Mucosa of descending colon (tissue), 3 donors: ENCODE measurements at regions of chr2 and their contacts with region 1.

Region 1: DNA sequence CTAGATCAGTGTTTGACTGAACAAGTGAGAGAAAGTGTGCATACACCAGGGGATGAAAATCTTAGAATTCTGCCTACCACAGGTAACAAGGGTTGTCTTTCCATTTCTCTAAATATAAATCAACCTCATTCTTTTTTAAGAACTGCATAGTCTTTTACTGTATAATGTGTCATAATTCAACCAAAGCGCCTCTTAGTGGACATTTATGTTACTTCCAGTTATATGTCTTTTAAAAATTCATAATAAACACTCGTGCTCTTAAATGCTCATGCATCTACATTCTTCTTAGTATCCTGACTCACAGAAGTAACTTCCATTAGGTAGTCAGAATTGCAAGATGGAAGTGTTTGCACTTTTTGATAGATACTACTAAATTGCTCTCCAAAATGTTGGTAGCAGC is 76.2 kb downstream of the CHRNA1 start:
- DNase-seq: no peak
- ATAC-seq: peak; percentile 27
- H3K4me3 ChIP-seq: no peak overlapping the region
- H3K4me1 ChIP-seq: peaks cover 6% of the 10 kb centered on the region
- CTCF ChIP-seq: peak; percentile 12

Region 2: DNA sequence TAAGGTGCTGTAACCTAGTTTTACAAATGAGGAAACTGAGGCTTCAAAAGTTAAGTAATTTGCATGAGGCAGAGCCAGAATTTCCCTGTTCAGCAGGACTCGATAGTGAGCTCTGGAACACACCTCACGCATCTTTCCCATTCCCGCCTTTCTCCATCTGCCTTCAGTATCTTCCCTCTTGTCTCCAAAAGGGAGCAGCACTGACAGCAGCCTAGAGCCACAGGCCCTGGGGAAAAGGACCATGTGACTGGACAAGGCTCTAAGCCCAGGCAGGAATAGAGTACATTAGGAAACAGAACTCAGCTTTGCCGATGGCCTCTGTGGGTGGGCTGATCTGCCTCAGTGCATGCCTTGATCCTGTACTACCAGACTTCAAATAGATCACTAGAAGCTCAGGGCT is 222.8 kb before region 1 on chr2:
- intact Hi-C with region 1: loop called (anchors 5 kb)
- DNase-seq: no peak
- ATAC-seq: no peak
- H3K4me3 ChIP-seq: no peak overlapping the region
- H3K4me1 ChIP-seq: no peaks in the 10 kb centered on the region
- CTCF ChIP-seq: no peak

Region 3: DNA sequence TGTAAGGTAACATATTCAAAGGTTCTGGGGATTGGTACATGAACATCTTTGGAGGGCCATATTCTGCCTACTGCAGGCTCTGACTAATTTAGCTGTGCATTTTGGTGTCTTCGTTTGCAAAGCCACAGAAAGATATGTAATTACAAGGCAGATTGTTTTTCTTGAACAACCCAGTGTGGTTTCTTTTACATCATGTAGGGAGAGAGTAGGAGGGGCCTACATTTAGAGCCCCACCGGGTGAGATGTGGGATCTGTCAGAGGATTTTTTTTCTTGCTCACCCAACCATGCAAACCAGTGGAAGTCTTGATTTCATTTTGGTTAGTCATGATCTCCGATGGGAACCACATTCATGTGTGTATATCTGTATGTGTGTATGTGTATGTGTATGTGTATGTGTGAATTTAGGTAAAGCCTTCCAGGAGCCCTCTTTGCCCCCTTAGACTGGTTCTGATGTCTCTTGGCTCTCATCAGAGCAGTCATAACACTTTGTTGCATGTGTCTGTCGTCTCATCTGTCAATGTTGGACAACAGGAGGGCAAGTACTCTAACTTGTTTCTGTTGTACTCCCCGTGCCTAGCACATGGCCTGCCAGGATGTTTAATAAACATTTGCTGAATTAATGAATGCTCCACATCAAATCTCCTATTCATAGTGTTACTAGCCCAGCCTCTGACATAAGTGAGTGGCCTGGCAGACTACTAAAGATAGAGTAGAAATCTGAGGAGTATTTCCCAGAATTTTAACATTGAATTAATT is 1821.1 kb after region 1 on chr2:
- intact Hi-C with region 1: no loop called
- DNase-seq: no peak
- ATAC-seq: no peak
- H3K4me3 ChIP-seq: no peak overlapping the region
- H3K4me1 ChIP-seq: peaks cover 2% of the 10 kb centered on the region
- CTCF ChIP-seq: no peak